Panc1 (cell line): ENCODE measurements at regions of chr15 and their contacts with region 1.

Region 1: GRCh38 chr15:45522328-45523160 is at the start of gene SLC30A4:
- DNase-seq: peak; percentile 17
- ATAC-seq: peak; percentile 98
- H3K4me3 ChIP-seq: peak within 1 kb of the TSS; percentile 72 to 80
- H3K27ac ChIP-seq: peak within 1 kb of the TSS; percentile 89
- H3K4me1 ChIP-seq: peaks cover 15% of the 10 kb centered on the region
- H3K27me3 ChIP-seq: no peaks in the 10 kb centered on the region
- CTCF ChIP-seq: peak; percentile 80
- total RNA-seq, gene SLC30A4: 9.3 TPM

Region 2: GRCh38 chr15:45495588-45495987 is 27.0 kb before region 1 on chr15:
- CTCF ChIA-PET with region 1: no interaction called
- POLR2A ChIA-PET with region 1: no interaction called
- in situ Hi-C with region 1: no loop called
- intact Hi-C with region 1: no loop called
- DNase-seq: no peak
- ATAC-seq: no peak
- H3K4me3 ChIP-seq: no peak overlapping the region
- H3K27ac ChIP-seq: no peak overlapping the region
- H3K4me1 ChIP-seq: no peaks in the 10 kb centered on the region
- H3K27me3 ChIP-seq: no peaks in the 10 kb centered on the region
- CTCF ChIP-seq: no peak

Region 3: GRCh38 chr15:45573961-45574629 is 51.6 kb after region 1 on chr15:
- CTCF ChIA-PET with region 1: no interaction called
- POLR2A ChIA-PET with region 1: no interaction called
- in situ Hi-C with region 1: no loop called
- intact Hi-C with region 1: no loop called
- DNase-seq: no peak
- ATAC-seq: peak; percentile 73
- H3K4me3 ChIP-seq: no peak overlapping the region
- H3K27ac ChIP-seq: no peak overlapping the region
- H3K4me1 ChIP-seq: no peaks in the 10 kb centered on the region
- H3K27me3 ChIP-seq: no peaks in the 10 kb centered on the region
- CTCF ChIP-seq: peak; percentile 31; the same call in 1 of the 2 replicates

Region 4: DNA sequence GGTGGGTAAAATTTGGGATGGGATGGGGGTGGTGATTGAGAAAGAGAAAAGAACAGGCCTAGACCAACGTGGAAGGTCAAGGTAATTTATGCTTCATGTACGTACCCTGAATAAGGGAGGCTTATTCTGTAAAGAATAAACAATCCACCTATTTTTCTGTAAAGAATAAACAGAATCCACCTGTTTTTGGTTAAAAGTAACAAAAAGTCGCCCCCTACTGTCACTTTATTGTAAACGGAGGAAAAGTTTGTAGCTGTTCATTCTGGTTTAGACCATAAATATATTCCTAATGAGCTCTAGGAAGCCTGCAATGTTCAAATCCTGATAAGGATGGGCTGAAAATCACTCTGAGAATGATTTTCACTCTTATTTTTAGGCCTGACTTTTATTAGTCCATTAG is 88.8 kb after region 1 on chr15:
- CTCF ChIA-PET with region 1: no interaction called
- POLR2A ChIA-PET with region 1: no interaction called
- in situ Hi-C with region 1: no loop called
- intact Hi-C with region 1: loop called (anchors 10 kb)
- DNase-seq: no peak
- ATAC-seq: no peak
- H3K4me3 ChIP-seq: no peak overlapping the region
- H3K27ac ChIP-seq: no peak overlapping the region
- H3K4me1 ChIP-seq: peaks cover 7% of the 10 kb centered on the region; the same call in 1 of the 2 replicates
- H3K27me3 ChIP-seq: no peaks in the 10 kb centered on the region
- CTCF ChIP-seq: peak; percentile 65

Region 5: GRCh38 chr15:45743426-45744235 is 221.1 kb after region 1 on chr15:
- CTCF ChIA-PET with region 1: no interaction called
- POLR2A ChIA-PET with region 1: no interaction called
- in situ Hi-C with region 1: no loop called
- intact Hi-C with region 1: no loop called
- DNase-seq: no peak
- ATAC-seq: no peak
- H3K4me3 ChIP-seq: no peak overlapping the region
- H3K27ac ChIP-seq: no peak overlapping the region
- H3K4me1 ChIP-seq: no peaks in the 10 kb centered on the region
- H3K27me3 ChIP-seq: no peaks in the 10 kb centered on the region
- CTCF ChIP-seq: no peak